ENCODE measurements at regions of chr5 and their contacts with region 1.

Region 1: DNA sequence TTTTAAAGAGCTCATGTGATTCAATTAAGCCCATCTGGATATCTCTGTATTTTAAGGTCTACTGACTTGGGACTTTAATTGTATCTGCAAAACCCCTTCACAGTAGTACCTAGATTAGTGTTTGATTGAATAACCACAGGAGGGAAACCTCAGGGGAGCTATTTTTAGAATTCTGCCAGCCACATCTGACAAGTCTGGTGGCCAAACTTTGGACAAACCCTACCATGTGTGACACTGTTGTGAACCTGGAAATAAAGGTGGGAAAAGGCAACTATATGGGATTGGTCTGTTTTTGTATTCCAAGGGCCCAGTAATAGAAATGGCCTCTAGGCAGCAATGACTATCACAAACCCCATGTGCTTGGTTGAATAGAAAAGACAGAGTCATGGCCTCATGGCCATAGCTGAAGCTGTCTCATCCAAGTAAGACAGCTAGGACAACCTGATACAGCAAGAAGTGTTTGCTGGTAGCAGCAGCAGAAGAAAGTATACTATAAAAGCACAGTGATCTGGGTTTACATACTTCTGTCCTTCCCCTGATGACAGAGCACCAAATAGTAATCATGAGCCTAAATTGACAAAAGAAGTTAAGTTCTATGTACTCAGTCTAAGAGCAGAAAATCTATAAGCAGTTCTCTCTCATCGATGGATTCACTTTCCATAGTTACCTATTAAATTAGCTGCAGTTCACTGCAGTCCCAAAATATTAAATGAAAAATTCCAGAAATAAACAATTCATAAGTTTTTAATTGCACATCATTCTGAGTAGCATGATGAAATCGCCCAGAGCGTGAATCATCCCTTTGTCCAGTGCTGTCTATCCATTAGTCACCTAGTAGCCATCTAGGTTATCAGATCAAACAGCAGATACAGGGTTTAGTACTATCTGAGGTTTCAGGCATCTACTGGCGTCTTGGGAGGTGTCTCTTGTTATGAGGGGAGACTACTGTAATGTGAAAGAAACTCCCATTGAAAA is 189.8 kb downstream of the ARHGAP26 start:
- DNase-seq: peak; percentile 89
- H3K4me3 Mint-ChIP-seq: no peak overlapping the region
- H3K27ac Mint-ChIP-seq: peak overlapping the region; percentile 60
- H3K4me1 Mint-ChIP-seq: peaks cover 26% of the 10 kb centered on the region
- H3K27me3 Mint-ChIP-seq: no peaks in the 10 kb centered on the region
- CTCF ChIP-seq: no peak

Region 2: GRCh38 chr5:142938266-142938880 is 21.6 kb before region 1 on chr5:
- CTCF ChIA-PET with region 1: interaction called, 3 read pairs
- POLR2A ChIA-PET with region 1: interaction called, 17 read pairs
- intact Hi-C with region 1: no loop called
- DNase-seq: no peak
- H3K4me3 Mint-ChIP-seq: no peak overlapping the region
- H3K27ac Mint-ChIP-seq: no peak overlapping the region
- H3K4me1 Mint-ChIP-seq: no peaks in the 10 kb centered on the region
- H3K27me3 Mint-ChIP-seq: no peaks in the 10 kb centered on the region
- CTCF ChIP-seq: no peak

Region 3: GRCh38 chr5:142977363-142978051 is 17.5 kb after region 1 on chr5:
- CTCF ChIA-PET with region 1: interaction called, 15 read pairs
- POLR2A ChIA-PET with region 1: interaction called, 8 read pairs
- intact Hi-C with region 1: no loop called
- DNase-seq: peak; percentile 93
- H3K4me3 Mint-ChIP-seq: peak overlapping the region; percentile 29
- H3K27ac Mint-ChIP-seq: peak overlapping the region; percentile 87
- H3K4me1 Mint-ChIP-seq: peaks cover 43% of the 10 kb centered on the region
- H3K27me3 Mint-ChIP-seq: no peaks in the 10 kb centered on the region
- CTCF ChIP-seq: no peak